Activated T-helper 1 cell treated with anti-CD3 and anti-CD28 coated beads, Interleukin-12 subunit alpha, Interleukin-12 subunit beta, Interleukin-2, Interleukin-4 antibody, amounts not matched to agents 30 ng/mL and 10 ng/mL and 1 ng/mL, durations not matched to agents 14 hours and 24 hours and 36 hours (primary cell): ENCODE measurements at regions of chr9 and their contacts with region 1.

Region 1: GRCh38 chr9:113876151-113876992 is at the start of gene ZNF618:
- DNase-seq: no peak
- H3K4me3 Mint-ChIP-seq: peak within 1 kb of the TSS; percentile 92
- H3K27ac Mint-ChIP-seq: peak within 1 kb of the TSS; percentile 20
- H3K4me1 Mint-ChIP-seq: no peaks in the 10 kb centered on the region
- H3K27me3 Mint-ChIP-seq: peaks cover 40% of the 10 kb centered on the region
- total RNA-seq, gene ZNF618: 0.07 and 0.16 TPM in 2 replicates

Region 2: DNA sequence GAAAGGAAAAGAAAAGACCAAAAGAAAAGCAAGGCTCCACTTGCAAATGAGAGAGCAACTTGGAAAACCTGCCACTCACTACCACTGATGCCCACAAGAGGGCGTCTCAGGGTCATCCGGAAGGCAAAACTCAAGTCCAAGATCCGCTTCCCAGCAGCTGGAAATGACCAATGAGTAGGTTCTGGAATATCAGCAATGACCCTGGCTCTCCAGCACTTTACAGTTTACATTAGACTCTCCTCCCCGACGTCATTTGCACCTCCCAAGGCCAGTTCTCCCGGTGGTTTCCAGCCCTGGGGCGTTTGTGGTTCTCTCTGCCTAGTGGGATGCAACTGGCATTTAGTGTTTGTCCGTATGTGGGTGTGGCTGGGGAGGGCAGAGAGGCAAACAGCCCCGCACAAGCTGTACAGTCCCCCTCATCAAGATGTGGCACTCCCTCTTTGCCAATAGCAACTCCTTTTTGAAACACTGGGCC is 194.0 kb before region 1 on chr9:
- intact Hi-C with region 1: loop called (anchors 5 kb)
- DNase-seq: no peak
- H3K4me3 Mint-ChIP-seq: no peak overlapping the region
- H3K27ac Mint-ChIP-seq: no peak overlapping the region
- H3K4me1 Mint-ChIP-seq: peaks cover 5% of the 10 kb centered on the region
- H3K27me3 Mint-ChIP-seq: peaks cover 34% of the 10 kb centered on the region

Region 3: DNA sequence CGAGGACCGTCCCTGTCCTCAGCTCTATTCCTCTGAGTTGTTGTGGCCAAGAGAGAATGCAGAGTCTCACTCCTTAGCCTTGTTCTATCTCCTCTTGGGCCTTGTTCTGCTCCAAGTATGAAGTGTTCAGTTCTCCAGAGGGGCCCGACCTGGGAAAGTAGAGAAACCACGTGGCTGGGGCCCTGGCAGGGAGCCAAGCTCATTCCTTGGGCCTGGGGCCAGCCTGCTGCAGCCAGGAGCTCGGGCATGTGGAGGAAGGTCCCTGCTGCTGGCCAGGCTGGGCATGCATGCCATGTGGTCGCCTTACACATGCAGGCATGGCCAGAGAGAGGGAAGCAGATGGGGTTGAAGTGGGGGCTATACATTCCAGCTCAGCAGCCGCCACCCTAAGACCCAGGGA is 339.7 kb after region 1 on chr9:
- intact Hi-C with region 1: no loop called
- DNase-seq: no peak
- H3K4me3 Mint-ChIP-seq: no peak overlapping the region
- H3K27ac Mint-ChIP-seq: no peak overlapping the region
- H3K4me1 Mint-ChIP-seq: no peaks in the 10 kb centered on the region
- H3K27me3 Mint-ChIP-seq: no peaks in the 10 kb centered on the region